ENCODE measurements at regions of chr1 and their contacts with region 1.

Region 1: GRCh38 chr1:39720094-39720999 is 18.3 kb upstream of the PPIE start:
- DNase-seq: peak in 7 of 9 donors; percentile 49 to 75 (median 70)
- ATAC-seq: peak; percentile 87
- H3K4me3 ChIP-seq: no peak overlapping the region
- H3K4me3 Mint-ChIP-seq: no peak overlapping the region
- H3K27ac ChIP-seq: no peak overlapping the region
- H3K27ac Mint-ChIP-seq: no peak overlapping the region
- H3K4me1 ChIP-seq: no peaks in the 10 kb centered on the region
- H3K4me1 Mint-ChIP-seq: peaks cover 0 to 3% (median 0%) of the 10 kb centered on the region in 7 donors
- H3K27me3 ChIP-seq: no peaks in the 10 kb centered on the region
- H3K27me3 Mint-ChIP-seq: peaks cover 19 to 64% (median 41%) of the 10 kb centered on the region in 5 donors

Region 2: GRCh38 chr1:39609618-39610331 is 110.6 kb before region 1 on chr1:
- CTCF ChIA-PET with region 1: interaction called, 33 read pairs
- POLR2A ChIA-PET with region 1: no interaction called
- intact Hi-C with region 1: loop called (anchors 1 kb)
- DNase-seq: peak; percentile 10 to 84 (median 66)
- ATAC-seq: peak; percentile 89
- H3K4me3 ChIP-seq: no peak overlapping the region
- H3K4me3 Mint-ChIP-seq: peak overlapping the region in 2 of 10 donors; percentile 51 to 59
- H3K27ac ChIP-seq: no peak overlapping the region
- H3K27ac Mint-ChIP-seq: no peak overlapping the region
- H3K4me1 ChIP-seq: no peaks in the 10 kb centered on the region
- H3K4me1 Mint-ChIP-seq: peaks cover 0 to 9% (median 8%) of the 10 kb centered on the region in 7 donors
- H3K27me3 ChIP-seq: no peaks in the 10 kb centered on the region
- H3K27me3 Mint-ChIP-seq: peaks cover 0 to 4% (median 0%) of the 10 kb centered on the region in 5 donors

Region 3: GRCh38 chr1:39625462-39626273 is 94.7 kb before region 1 on chr1:
- CTCF ChIA-PET with region 1: no interaction called
- POLR2A ChIA-PET with region 1: no interaction called
- intact Hi-C with region 1: no loop called
- DNase-seq: no peak
- ATAC-seq: no peak
- H3K4me3 ChIP-seq: no peak overlapping the region
- H3K4me3 Mint-ChIP-seq: no peak overlapping the region
- H3K27ac ChIP-seq: no peak overlapping the region
- H3K27ac Mint-ChIP-seq: no peak overlapping the region
- H3K4me1 ChIP-seq: no peaks in the 10 kb centered on the region
- H3K4me1 Mint-ChIP-seq: peaks cover 0 to 3% (median 0%) of the 10 kb centered on the region in 7 donors
- H3K27me3 ChIP-seq: no peaks in the 10 kb centered on the region
- H3K27me3 Mint-ChIP-seq: peaks cover 0 to 10% (median 9%) of the 10 kb centered on the region in 5 donors

Region 4: DNA sequence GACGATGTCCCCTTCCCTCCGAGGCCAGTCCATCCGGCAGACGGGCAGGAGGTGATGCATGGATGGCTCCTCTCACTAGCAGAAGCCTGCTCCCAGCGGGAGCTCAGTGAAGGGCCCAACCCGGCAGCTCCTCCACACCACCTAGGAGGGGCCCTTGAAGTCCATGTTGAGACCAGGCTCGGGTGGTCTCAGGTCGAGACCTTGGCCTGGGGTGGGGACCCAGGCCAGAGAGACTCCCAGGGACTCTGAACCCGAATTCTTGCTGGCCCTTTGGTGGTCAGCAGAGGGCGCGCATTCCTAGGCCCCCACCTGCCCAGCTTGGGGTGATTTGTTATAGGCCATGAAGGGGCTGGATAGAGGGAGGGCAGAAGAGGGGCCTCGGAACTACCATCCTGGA is 47.8 kb before region 1 on chr1:
- CTCF ChIA-PET with region 1: interaction called, 32 read pairs
- POLR2A ChIA-PET with region 1: interaction called, 4 read pairs
- intact Hi-C with region 1: loop called (anchors 1 kb)
- DNase-seq: peak in 5 of 9 donors; percentile 19 to 43 (median 20)
- ATAC-seq: peak; percentile 54
- H3K4me3 ChIP-seq: no peak overlapping the region
- H3K4me3 Mint-ChIP-seq: peak overlapping the region; percentile 37 to 79 (median 64)
- H3K27ac ChIP-seq: no peak overlapping the region
- H3K27ac Mint-ChIP-seq: peak overlapping the region in 1 of 9 donors; percentile 55
- H3K4me1 ChIP-seq: peaks cover 0 to 14% of the 10 kb centered on the region in 2 donors
- H3K4me1 Mint-ChIP-seq: peaks cover 5 to 12% (median 7%) of the 10 kb centered on the region in 7 donors
- H3K27me3 ChIP-seq: peaks cover 0 to 7% of the 10 kb centered on the region in 2 donors
- H3K27me3 Mint-ChIP-seq: peaks cover 23 to 44% (median 29%) of the 10 kb centered on the region in 5 donors

Region 5: GRCh38 chr1:39691262-39692151 is 28.8 kb before region 1 on chr1 and contains the start of gene HPCAL4:
- CTCF ChIA-PET with region 1: no interaction called
- POLR2A ChIA-PET with region 1: interaction called, 3 read pairs
- intact Hi-C with region 1: loop called in 1 of 2 experiments (anchors 1 kb)
- DNase-seq: peak; percentile 79 to 93 (median 88)
- ATAC-seq: peak; percentile 93
- H3K4me3 ChIP-seq: peak within 1 kb of the TSS; percentile 89
- H3K4me3 Mint-ChIP-seq: peak within 1 kb of the TSS; percentile 71 to 90 (median 86)
- H3K27ac ChIP-seq: peak within 1 kb of the TSS; percentile 69
- H3K27ac Mint-ChIP-seq: peak within 1 kb of the TSS; percentile 60 to 93 (median 84)
- H3K4me1 ChIP-seq: peaks cover 21 to 36% of the 10 kb centered on the region in 2 donors
- H3K4me1 Mint-ChIP-seq: peaks cover 22 to 48% (median 28%) of the 10 kb centered on the region in 7 donors
- H3K27me3 ChIP-seq: no peaks in the 10 kb centered on the region
- H3K27me3 Mint-ChIP-seq: peaks cover 0 to 63% (median 13%) of the 10 kb centered on the region in 5 donors
- total RNA-seq, gene HPCAL4: 2.9 to 49.0 (median 18.7) TPM

Region 6: DNA sequence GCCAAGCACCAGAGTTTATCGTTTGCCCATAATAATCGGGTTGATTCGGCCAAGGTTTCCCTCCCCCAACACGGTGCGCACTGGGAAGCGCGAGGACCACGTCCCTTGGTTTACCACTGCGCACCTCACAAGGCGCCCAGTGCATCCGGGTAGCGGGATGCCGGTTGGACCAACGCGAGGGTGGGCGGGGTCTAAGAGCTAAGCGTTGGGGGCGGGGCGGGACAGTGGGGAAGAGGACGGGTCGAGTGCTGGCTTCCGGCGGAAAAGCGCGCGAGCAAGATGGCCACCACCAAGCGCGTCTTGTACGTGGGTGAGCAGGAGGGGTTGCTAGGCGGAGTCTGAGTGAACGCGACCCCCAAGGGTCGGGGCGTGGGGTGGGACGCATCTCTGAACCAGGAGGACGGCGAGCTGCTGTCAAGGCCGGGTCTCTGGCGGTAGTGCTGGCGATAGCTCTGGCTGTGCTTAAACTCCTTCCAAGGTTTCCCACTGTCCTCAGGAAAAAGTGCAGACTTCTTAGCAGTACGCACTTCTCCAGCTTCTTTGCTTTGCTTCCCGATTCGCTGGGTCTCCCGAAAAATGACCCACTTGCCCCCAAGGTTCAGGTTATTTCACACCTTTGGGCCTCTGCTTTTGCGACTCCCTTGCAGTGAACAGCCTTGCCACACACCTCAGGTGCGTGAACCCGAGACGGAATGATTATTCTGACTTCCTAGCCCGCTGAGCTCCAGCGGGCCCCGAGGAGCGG is 18.4 kb after region 1 on chr1 and contains the start of gene PPIE:
- CTCF ChIA-PET with region 1: interaction called, 3 read pairs
- POLR2A ChIA-PET with region 1: interaction called, 5 read pairs
- intact Hi-C with region 1: loop called in 1 of 2 experiments (anchors 1 kb)
- DNase-seq: peak; percentile 71 to 88 (median 85)
- ATAC-seq: peak; percentile 99
- H3K4me3 ChIP-seq: peak within 1 kb of the TSS; percentile 88
- H3K4me3 Mint-ChIP-seq: peak within 1 kb of the TSS; percentile 86 to 98 (median 96)
- H3K27ac ChIP-seq: peak within 1 kb of the TSS; percentile 74
- H3K27ac Mint-ChIP-seq: peak within 1 kb of the TSS; percentile 92 to 97 (median 96)
- H3K4me1 ChIP-seq: peaks cover 16 to 17% of the 10 kb centered on the region in 2 donors
- H3K4me1 Mint-ChIP-seq: peaks cover 21 to 44% (median 38%) of the 10 kb centered on the region in 7 donors
- H3K27me3 ChIP-seq: no peaks in the 10 kb centered on the region
- H3K27me3 Mint-ChIP-seq: peaks cover 2 to 16% (median 11%) of the 10 kb centered on the region in 5 donors
- total RNA-seq, gene PPIE: 52.3 to 79.1 (median 61.3) TPM

Measured in naive thymus-derived CD4-positive, alpha-beta T cell (primary cell).